ENCODE measurements at regions of chr3 and their contacts with region 1.

Region 1: DNA sequence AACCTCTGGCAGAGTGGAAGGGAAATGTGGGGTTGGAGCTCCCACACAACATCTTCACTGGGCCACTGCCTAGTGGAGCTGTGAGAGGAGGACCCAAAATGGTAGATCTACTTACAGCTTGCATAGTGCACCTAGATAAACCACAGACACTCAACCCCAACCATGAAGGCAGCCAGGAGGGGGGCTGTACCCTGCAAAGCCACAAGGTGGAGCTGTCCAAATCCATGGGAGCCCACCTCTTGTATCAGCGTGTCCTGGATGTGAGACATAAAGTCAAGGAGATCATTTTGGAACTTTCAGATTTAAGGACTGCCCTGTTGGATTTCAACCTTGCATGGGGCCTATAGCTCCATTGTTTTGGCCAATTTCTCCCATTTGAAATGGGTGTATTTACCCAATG is 20.9 kb downstream of the TP63 start:
- DNase-seq: no peak
- H3K4me3 ChIP-seq: no peak overlapping the region
- H3K27ac ChIP-seq: no peak overlapping the region
- H3K27me3 ChIP-seq: no peaks in the 10 kb centered on the region
- CTCF ChIP-seq: peak; percentile 54

Region 2: GRCh38 chr3:189365609-189366564 is 286.2 kb before region 1 on chr3:
- CTCF ChIA-PET with region 1: no interaction called
- POLR2A ChIA-PET with region 1: no interaction called
- DNase-seq: no peak
- H3K4me3 ChIP-seq: no peak overlapping the region
- H3K27ac ChIP-seq: no peak overlapping the region
- H3K27me3 ChIP-seq: no peaks in the 10 kb centered on the region
- CTCF ChIP-seq: no peak

Region 3: DNA sequence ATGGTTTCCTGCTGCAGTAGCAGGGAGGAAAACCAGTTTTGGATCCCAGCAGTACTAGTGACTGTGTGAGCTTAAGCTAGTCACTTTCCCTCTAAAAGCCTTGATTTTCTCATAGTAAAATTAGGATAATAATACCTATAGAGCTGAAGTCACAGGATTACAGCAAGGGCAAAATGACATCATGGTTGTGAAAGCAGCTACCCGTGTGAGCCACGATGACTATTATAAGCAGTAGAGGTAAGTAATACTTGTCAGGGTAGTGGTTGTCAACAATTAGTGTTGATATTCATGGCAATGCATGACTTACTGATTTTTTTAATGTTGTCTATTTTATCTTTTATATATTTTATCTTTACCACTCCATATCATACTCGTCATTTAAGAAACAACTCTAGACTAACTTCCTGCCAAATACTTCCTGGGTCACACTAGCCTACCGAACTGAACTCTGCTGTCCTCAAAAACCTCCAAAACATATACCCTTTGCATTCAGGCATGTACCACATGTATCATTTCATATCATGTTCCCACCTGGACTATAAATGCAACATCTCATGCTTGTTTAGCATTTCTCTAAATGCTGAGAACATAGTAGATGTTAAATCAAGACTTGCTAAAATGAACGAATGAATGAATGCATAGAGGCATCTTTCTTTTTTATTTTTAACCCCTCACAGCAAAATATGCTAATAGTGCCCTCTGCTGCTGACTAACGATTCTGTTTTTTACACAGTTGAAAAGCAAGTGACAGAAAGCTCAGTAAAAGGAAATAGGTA is 296.1 kb after region 1 on chr3:
- CTCF ChIA-PET with region 1: interaction called, 19 read pairs
- POLR2A ChIA-PET with region 1: no interaction called
- DNase-seq: no peak
- H3K4me3 ChIP-seq: no peak overlapping the region
- H3K27ac ChIP-seq: no peak overlapping the region
- H3K27me3 ChIP-seq: peaks cover 3% of the 10 kb centered on the region
- CTCF ChIP-seq: peak; percentile 66

Measured in AG04450 (cell line).